ENCODE measurements at regions of chr17 and their contacts with region 1.

Region 1: GRCh38 chr17:7825206-7825990 is 8.6 kb upstream of the KDM6B start:
- DNase-seq: no peak
- H3K4me3 ChIP-seq: no peak overlapping the region
- H3K27ac ChIP-seq: no peak overlapping the region
- H3K4me1 ChIP-seq: no peaks in the 10 kb centered on the region
- H3K27me3 ChIP-seq: no peaks in the 10 kb centered on the region
- CTCF ChIP-seq: no peak
- EP300 ChIP-seq: no peak
- POLR2A ChIP-seq: no peak

Region 2: GRCh38 chr17:7740481-7741001 is 84.9 kb before region 1 on chr17:
- intact Hi-C with region 1: loop called in 1 of 4 experiments (anchors 5 kb)
- DNase-seq: peak in 2 of 5 donors; percentile 49 to 54
- H3K4me3 ChIP-seq: no peak overlapping the region
- H3K27ac ChIP-seq: no peak overlapping the region
- H3K4me1 ChIP-seq: no peaks in the 10 kb centered on the region
- H3K27me3 ChIP-seq: no peaks in the 10 kb centered on the region
- CTCF ChIP-seq: no peak
- EP300 ChIP-seq: no peak
- POLR2A ChIP-seq: no peak

Region 3: DNA sequence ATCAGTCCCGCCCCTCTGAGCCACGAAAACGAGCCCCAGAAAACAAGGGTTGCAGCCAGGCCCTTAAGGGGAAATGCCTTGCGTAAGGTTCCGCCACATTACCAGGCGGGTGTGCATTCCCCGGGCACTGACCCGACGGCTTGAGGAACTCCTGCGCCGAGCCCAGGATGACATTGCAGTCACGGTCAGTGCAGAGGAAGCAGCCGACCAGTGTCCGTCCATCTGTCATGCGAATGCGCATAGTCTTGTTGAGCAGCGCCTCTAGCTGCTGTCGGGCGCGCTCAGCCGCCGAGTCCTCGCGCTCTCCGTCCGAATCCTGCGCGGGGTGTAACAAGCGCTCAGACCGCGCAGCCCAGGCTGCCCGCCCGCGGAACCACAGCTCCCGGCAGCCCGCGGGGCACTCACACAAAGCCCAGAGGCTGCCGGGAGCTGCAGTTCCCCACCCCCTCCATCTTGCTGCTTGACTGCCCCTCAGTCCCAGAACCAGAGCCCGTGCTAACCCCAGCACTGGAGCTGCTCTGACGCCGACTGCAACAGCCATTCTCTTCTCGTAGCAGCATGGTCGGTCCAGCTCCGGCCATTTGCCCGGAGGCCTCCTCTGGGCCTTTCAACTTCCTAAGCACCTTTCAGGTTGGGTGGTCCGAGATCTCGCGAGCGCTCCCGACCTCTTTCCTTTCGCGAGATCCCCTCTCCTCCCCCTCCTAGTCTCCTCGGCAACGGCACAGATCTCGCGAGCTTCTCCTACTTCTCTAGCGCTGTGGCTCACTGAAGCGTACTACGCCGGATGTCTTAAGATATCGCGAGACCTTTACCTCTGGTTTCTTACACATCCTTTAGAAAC is 31.7 kb after region 1 on chr17 and contains the start of gene NAA38:
- intact Hi-C with region 1: loop called in 3 of 4 experiments (anchors 5 kb)
- DNase-seq: peak; percentile 95 to 98 (median 97)
- H3K4me3 ChIP-seq: peak within 1 kb of the TSS; percentile 71
- H3K27ac ChIP-seq: peak within 1 kb of the TSS; percentile 84 to 85
- H3K4me1 ChIP-seq: peaks cover 6% of the 10 kb centered on the region
- H3K27me3 ChIP-seq: no peaks in the 10 kb centered on the region
- CTCF ChIP-seq: peak in 2 of 3 donors; percentile 49 to 76
- EP300 ChIP-seq: no peak
- POLR2A ChIP-seq: peak; percentile 29
- total RNA-seq, gene NAA38: 46.4 to 82.8 (median 54.6) TPM

Region 4: DNA sequence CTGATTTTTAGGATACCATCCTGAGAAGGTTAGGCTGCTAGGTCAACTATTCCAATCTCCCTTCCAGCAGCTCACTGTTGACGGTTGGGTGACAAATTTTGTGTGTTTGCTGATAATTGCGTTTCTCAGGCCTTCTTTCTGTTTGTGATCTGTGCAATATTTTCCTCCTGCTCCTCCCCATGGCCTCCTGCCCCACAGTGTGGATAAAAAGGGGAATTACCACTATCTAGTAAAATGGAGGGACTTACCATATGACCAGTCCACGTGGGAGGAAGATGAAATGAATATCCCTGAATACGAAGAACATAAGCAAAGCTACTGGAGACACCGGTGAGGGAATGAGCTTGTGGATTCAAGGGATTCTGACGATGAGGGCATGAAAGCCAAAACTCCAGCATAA is 72.4 kb after region 1 on chr17:
- intact Hi-C with region 1: loop called in 1 of 4 experiments (anchors 2 kb)
- DNase-seq: no peak
- H3K4me3 ChIP-seq: no peak overlapping the region
- H3K27ac ChIP-seq: no peak overlapping the region
- H3K4me1 ChIP-seq: no peaks in the 10 kb centered on the region
- H3K27me3 ChIP-seq: no peaks in the 10 kb centered on the region
- CTCF ChIP-seq: peak in 1 of 3 donors; percentile 28
- EP300 ChIP-seq: no peak
- POLR2A ChIP-seq: no peak

Measured in ovary (tissue), 10 donors.